Ascending aorta (tissue), 2 donors: ENCODE measurements at regions of chr15 and their contacts with region 1.

Region 1: DNA sequence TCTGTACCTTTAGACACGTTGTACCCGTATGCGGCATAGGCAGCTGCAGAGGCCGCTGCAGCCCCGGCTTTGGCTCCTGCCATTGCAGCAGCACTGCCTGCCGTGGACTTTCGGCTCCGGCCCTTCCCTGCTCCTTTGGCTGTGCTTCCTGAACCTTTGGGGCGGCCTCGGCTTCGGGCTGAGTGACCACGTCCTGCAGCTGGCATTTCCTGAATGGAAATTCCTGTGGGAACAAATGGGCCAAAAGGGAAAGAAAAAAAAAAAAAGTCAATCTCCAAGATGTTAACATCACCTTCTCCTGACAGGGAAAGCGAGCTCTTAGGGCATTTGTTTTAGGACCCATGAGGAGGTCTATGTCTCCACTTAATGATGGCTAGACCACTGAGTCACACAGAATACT is 29.6 kb downstream of the CHAC1 start:
- DNase-seq: peak in 1 of 2 donors; percentile 91
- H3K4me3 ChIP-seq: no peak overlapping the region
- H3K27ac ChIP-seq: peak overlapping the region; percentile 82 to 94
- H3K4me1 ChIP-seq: peaks cover 17 to 49% of the 10 kb centered on the region in 2 donors
- H3K27me3 ChIP-seq: no peaks in the 10 kb centered on the region
- CTCF ChIP-seq: peak in 2 of 3 experiments; percentile 26 to 31

Region 2: DNA sequence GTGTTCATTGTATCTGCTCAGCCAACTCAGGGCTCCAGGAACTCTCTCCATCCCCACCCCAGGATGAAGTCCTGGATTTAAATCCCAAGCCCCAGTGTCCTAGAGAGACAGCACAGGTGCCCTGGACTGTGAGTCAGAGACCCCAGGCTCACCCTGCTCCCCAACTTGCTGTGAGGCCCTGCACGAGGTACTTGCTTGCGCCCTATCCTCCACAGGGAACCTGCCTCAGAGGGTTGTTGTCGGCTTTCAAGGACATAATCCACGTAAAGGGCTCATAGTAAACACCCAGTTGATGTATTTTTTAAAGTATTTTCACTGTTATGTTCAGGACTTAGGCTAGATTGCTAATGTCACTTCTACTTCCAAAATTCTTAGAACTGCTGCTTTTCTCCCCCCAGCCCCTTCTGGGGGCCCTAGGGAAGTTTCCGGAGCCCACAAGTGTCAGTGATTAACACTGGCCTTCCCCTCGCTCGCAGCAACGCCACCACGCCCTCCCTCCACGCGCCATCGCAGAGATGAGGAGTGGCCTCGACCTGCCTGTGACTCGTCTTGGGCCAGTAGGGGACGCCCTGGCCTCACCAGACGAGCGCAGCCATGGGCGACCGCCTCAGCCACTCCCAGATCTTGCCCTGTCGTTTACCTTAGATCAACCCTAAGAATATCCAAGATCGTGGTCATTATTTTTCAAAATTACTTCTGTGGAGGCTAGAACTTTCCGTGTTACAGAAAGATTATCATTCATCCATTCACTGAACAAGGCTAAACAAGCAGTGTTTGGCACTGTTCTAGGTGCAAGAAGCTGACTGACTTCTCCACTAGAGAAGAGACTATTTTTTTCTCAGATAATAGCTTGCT is 937.9 kb before region 1 on chr15:
- intact Hi-C with region 1: no loop called
- DNase-seq: peak; percentile 73 to 93
- H3K4me3 ChIP-seq: peak overlapping the region in 1 of 2 donors; percentile 24
- H3K27ac ChIP-seq: peak overlapping the region in 1 of 2 donors; percentile 21
- H3K4me1 ChIP-seq: peaks cover 0 to 10% of the 10 kb centered on the region in 2 donors
- H3K27me3 ChIP-seq: no peaks in the 10 kb centered on the region
- CTCF ChIP-seq: peak; percentile 90 to 99 (median 94)

Region 3: GRCh38 chr15:40941528-40942336 is 41.1 kb before region 1 on chr15:
- intact Hi-C with region 1: loop called (anchors 2 kb)
- DNase-seq: peak in 1 of 2 donors; percentile 84
- H3K4me3 ChIP-seq: peak overlapping the region; percentile 69 to 70
- H3K27ac ChIP-seq: peak overlapping the region; percentile 77 to 88
- H3K4me1 ChIP-seq: peaks cover 0 to 17% of the 10 kb centered on the region in 2 donors
- H3K27me3 ChIP-seq: no peaks in the 10 kb centered on the region
- CTCF ChIP-seq: peak in 2 of 3 experiments; percentile 32 to 94

Region 4: GRCh38 chr15:41011055-41011815 is 28.4 kb after region 1 on chr15:
- intact Hi-C with region 1: no loop called
- DNase-seq: no peak
- H3K4me3 ChIP-seq: no peak overlapping the region
- H3K27ac ChIP-seq: no peak overlapping the region
- H3K4me1 ChIP-seq: peaks cover 0 to 2% of the 10 kb centered on the region in 2 donors
- H3K27me3 ChIP-seq: no peaks in the 10 kb centered on the region
- CTCF ChIP-seq: no peak